ENCODE measurements at regions of chr5 and their contacts with region 1.

Region 1: GRCh38 chr5:172188033-172188892 is at the start of gene STK10:
- DNase-seq: peak; percentile 94
- H3K4me3 ChIP-seq: peak within 1 kb of the TSS; percentile 62 to 86 (median 76)
- H3K27ac ChIP-seq: peak within 1 kb of the TSS; percentile 92 to 97 (median 96)
- H3K4me1 ChIP-seq: peaks cover 6 to 27% (median 14%) of the 10 kb centered on the region in 4 donors
- H3K27me3 ChIP-seq: no peaks in the 10 kb centered on the region
- CTCF ChIP-seq: peak; percentile 82 to 92 (median 89)
- EP300 ChIP-seq: no peak
- POLR2A ChIP-seq: peak; percentile 80
- total RNA-seq, gene STK10: 21.2 to 207 (median 49.3) TPM

Region 2: GRCh38 chr5:171863930-171864329 is 324.3 kb before region 1 on chr5:
- in situ Hi-C with region 1: no loop called
- intact Hi-C with region 1: no loop called
- DNase-seq: no peak
- H3K4me3 ChIP-seq: no peak overlapping the region
- H3K27ac ChIP-seq: no peak overlapping the region
- H3K4me1 ChIP-seq: no peaks in the 10 kb centered on the region
- H3K27me3 ChIP-seq: no peaks in the 10 kb centered on the region
- CTCF ChIP-seq: no peak
- EP300 ChIP-seq: no peak
- POLR2A ChIP-seq: no peak

Region 3: GRCh38 chr5:172150514-172151425 is 37.5 kb before region 1 on chr5:
- in situ Hi-C with region 1: no loop called
- intact Hi-C with region 1: no loop called
- DNase-seq: peak; percentile 52
- H3K4me3 ChIP-seq: no peak overlapping the region
- H3K27ac ChIP-seq: peak overlapping the region; percentile 15 to 57 (median 44)
- H3K4me1 ChIP-seq: peaks cover 0 to 26% (median 10%) of the 10 kb centered on the region in 4 donors
- H3K27me3 ChIP-seq: no peaks in the 10 kb centered on the region
- CTCF ChIP-seq: no peak
- EP300 ChIP-seq: no peak
- POLR2A ChIP-seq: no peak

Region 4: GRCh38 chr5:172162323-172162986 is 25.8 kb before region 1 on chr5:
- in situ Hi-C with region 1: no loop called
- intact Hi-C with region 1: no loop called
- DNase-seq: no peak
- H3K4me3 ChIP-seq: no peak overlapping the region
- H3K27ac ChIP-seq: no peak overlapping the region
- H3K4me1 ChIP-seq: peaks cover 0 to 7% (median 4%) of the 10 kb centered on the region in 4 donors
- H3K27me3 ChIP-seq: no peaks in the 10 kb centered on the region
- CTCF ChIP-seq: no peak
- EP300 ChIP-seq: no peak
- POLR2A ChIP-seq: no peak

Region 5: DNA sequence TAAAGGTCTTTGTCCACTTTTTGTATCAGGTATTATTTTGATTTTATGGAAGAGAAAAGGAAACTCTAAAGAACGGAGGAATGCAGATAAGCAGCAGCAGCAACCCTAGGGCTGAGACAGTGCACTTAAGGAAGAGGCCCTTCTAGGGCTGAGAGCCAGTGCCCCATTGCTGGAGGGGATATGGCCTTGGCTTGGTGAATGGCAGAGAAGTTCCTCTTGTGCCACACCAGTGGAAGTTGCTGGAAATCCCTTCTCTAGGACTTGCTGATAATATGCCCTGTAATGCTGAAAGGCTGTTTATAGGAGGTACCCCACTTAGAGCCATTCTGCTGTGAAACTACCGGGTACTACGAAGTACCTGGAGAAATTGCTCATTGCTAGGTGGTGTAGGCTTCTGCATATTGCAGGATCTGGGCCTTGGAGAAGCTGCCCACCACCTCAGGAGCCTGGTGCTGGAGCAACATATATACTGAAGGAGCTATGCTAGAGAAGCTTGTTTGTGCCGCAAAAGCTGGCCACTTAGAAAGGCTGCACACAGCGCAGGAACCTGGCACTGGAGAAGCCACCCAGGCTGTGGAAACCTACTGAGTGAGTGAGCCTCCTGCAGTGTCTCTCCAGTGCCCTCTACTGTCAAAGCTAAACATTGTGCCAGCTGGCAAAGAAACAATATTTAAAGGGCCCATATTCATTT is 104.9 kb after region 1 on chr5:
- in situ Hi-C with region 1: loop called in 1 of 4 experiments (anchors 10 kb)
- intact Hi-C with region 1: loop called (anchors 5 kb)
- DNase-seq: peak; percentile 67
- H3K4me3 ChIP-seq: no peak overlapping the region
- H3K27ac ChIP-seq: no peak overlapping the region
- H3K4me1 ChIP-seq: peaks cover 0 to 5% (median 4%) of the 10 kb centered on the region in 4 donors
- H3K27me3 ChIP-seq: no peaks in the 10 kb centered on the region
- CTCF ChIP-seq: peak; percentile 76 to 86 (median 84)
- EP300 ChIP-seq: no peak
- POLR2A ChIP-seq: no peak